ENCODE measurements at regions of chr17 and their contacts with region 1.

Region 1: DNA sequence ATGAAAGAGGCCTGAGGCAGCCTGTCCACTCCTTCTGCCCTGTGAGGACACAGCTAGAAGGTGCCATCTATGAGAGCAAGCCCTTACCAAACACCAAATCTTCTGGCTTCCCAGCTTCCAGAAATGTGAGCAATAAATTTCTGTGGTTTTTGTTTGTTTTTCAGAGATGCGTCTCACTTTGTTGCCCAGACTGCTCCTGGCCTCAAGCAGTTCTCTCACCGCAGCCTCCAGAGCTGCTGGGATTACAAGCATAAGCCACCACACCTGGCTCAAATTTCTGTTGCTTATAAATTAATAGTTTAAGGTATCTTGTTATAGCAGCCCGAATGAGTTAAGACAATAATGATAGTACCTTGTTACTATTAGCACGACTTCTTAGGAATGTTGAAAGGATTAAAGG is 12.5 kb upstream of the SLC16A11 start:
- DNase-seq: no peak
- H3K4me3 Mint-ChIP-seq: no peak overlapping the region
- H3K27ac Mint-ChIP-seq: no peak overlapping the region
- H3K4me1 Mint-ChIP-seq: peaks cover 10% of the 10 kb centered on the region
- H3K27me3 Mint-ChIP-seq: no peaks in the 10 kb centered on the region
- CTCF ChIP-seq: no peak

Region 2: GRCh38 chr17:7098802-7099459 is 42.5 kb after region 1 on chr17:
- CTCF ChIA-PET with region 1: no interaction called
- intact Hi-C with region 1: no loop called
- DNase-seq: no peak
- H3K4me3 Mint-ChIP-seq: no peak overlapping the region
- H3K27ac Mint-ChIP-seq: no peak overlapping the region
- H3K4me1 Mint-ChIP-seq: peaks cover 8% of the 10 kb centered on the region
- H3K27me3 Mint-ChIP-seq: peaks cover 59% of the 10 kb centered on the region
- CTCF ChIP-seq: no peak

Region 3: DNA sequence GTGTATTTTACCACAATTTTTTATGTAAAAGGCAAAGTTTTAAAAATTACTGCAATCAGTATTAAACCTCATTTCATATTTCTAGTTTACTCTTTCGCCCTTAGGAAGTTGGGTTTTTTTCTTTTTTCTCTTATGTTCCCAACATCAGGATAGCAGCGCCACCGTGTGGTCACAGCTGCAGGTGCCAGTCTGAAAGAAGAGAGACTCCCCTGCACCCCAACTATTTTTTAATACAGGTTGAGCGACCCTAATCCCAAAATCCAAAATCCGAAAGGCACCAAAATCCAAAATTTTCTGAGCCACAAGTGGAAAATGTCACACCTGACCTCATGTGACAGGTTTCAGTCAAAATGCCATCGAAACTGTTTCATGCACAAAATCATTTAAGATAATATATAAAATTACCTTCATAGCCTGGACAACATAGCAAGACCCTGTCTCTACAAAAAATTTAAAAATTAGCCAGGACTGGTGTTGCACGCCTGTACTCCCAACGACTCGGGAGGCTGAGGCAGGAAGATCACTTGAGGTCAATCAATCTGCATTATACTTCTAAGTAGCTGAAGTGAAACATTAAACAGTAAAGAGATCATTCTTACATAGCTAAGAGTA is 80.0 kb after region 1 on chr17:
- CTCF ChIA-PET with region 1: interaction called, 8 read pairs
- intact Hi-C with region 1: loop called (anchors 1 kb)
- DNase-seq: peak; percentile 63
- H3K4me3 Mint-ChIP-seq: no peak overlapping the region
- H3K27ac Mint-ChIP-seq: no peak overlapping the region
- H3K4me1 Mint-ChIP-seq: peaks cover 6% of the 10 kb centered on the region
- H3K27me3 Mint-ChIP-seq: no peaks in the 10 kb centered on the region
- CTCF ChIP-seq: peak; percentile 58